Caco-2 (cell line): ENCODE measurements at regions of chr7 and their contacts with region 1.

Region 1: DNA sequence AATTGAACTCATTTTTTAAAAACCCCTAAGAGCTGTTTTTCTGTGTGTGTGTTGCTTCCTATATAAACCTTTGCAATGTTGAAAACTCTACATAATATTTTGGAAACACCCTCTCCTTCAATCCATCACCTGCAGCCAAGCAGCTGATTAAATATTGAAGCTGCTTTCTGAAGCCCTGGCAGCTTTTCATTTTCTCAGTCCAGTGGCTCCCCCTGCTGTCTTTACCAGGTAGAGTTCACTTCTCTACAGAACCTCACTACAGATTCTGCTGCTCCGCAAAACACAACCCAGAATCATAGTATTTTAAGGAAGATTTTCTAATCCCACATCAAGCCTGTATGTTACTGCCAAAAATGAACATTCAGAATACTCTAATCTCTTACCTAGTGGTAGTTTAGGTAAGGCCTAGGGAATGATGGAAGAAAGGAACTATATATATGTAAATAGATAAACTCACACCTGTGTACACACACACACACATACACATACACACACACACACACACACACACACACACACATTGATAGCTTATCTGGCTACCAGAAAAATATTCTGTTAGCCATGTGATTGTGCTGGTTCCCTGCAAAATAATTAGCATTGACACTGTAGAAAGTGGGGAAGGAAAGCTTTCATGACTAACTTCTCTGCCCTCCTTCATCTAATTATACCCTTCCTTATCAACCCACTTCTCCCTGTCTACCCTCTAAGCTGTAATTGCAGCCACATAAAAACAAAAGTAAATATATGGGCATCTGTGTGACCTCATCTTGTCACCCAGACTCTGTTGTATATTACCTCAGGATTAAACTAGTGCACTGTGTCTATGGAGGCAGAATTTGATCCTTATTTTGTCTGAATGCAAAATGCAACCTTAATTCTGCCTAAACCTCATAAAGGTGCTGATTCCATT is 229.5 kb upstream of the FZD1 start:
- DNase-seq: peak in 1 of 2 experiments; percentile 64
- H3K4me3 ChIP-seq: no peak overlapping the region
- H3K4me3 Mint-ChIP-seq: no peak overlapping the region
- H3K27ac Mint-ChIP-seq: no peak overlapping the region
- H3K4me1 ChIP-seq: no peaks in the 10 kb centered on the region
- H3K4me1 Mint-ChIP-seq: peaks cover 9% of the 10 kb centered on the region
- H3K27me3 ChIP-seq: no peaks in the 10 kb centered on the region
- H3K27me3 Mint-ChIP-seq: no peaks in the 10 kb centered on the region
- CTCF ChIP-seq: peak; percentile 69 to 72

Region 2: DNA sequence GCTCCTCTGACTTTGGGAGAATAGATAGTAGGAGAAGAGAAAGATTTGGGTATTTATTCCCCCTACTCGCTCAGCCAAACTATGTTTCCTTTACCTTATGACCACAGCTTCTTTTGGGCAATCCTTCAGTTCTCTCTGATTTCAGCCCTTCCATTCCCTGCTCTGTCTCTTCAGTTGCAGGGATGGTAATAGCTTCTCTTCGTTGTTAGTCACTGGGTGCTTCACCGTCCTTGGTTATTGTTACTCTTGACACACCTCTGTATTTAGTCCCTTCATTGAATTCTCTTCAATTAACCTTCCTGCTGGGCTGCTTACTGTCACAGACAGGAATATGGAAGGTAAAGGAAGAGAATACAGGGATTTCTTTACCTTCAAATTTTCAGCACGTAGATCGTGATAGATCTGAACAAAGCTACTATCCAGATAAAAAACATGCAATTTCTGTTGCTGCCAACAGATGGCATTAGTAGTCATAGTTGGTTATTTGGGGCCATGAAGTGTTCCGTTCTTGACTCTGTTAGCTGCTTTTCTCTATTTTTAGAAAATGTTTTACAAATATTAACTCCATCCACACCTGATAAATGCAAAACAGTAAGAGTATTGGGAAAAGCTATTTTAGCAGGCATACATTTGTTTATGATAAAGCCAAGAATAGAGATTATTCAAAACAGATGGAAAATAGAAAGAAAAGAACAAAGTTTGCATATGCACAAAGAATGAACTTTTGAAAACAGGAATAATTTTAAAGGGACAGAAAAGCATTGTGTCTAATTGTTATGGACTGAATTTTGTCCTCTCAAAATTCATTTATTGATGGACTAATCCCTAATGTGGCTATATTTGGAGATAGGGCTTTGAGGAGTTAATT is 579.3 kb before region 1 on chr7:
- CTCF ChIA-PET with region 1: interaction called, 23 read pairs
- POLR2A ChIA-PET with region 1: no interaction called
- intact Hi-C with region 1: loop called (anchors 1 kb)
- DNase-seq: peak in 1 of 2 experiments; percentile 42
- H3K4me3 ChIP-seq: no peak overlapping the region
- H3K4me3 Mint-ChIP-seq: peak overlapping the region; percentile 60
- H3K27ac Mint-ChIP-seq: no peak overlapping the region
- H3K4me1 ChIP-seq: 0 out of 2 replicates have a peak, but pooled peaks cover 4% of the 10 kb centered on the region
- H3K4me1 Mint-ChIP-seq: peaks cover 8% of the 10 kb centered on the region
- H3K27me3 ChIP-seq: no peaks in the 10 kb centered on the region
- H3K27me3 Mint-ChIP-seq: peaks cover 8% of the 10 kb centered on the region
- CTCF ChIP-seq: peak; percentile 40 to 75

Region 3: GRCh38 chr7:90613088-90613498 is 421.6 kb before region 1 on chr7:
- CTCF ChIA-PET with region 1: no interaction called
- POLR2A ChIA-PET with region 1: no interaction called
- intact Hi-C with region 1: no loop called
- DNase-seq: no peak
- H3K4me3 ChIP-seq: no peak overlapping the region
- H3K4me3 Mint-ChIP-seq: no peak overlapping the region
- H3K27ac Mint-ChIP-seq: no peak overlapping the region
- H3K4me1 ChIP-seq: no peaks in the 10 kb centered on the region
- H3K4me1 Mint-ChIP-seq: no peaks in the 10 kb centered on the region
- H3K27me3 ChIP-seq: no peaks in the 10 kb centered on the region
- H3K27me3 Mint-ChIP-seq: no peaks in the 10 kb centered on the region
- CTCF ChIP-seq: no peak

Region 4: GRCh38 chr7:90690159-90690858 is 344.4 kb before region 1 on chr7:
- CTCF ChIA-PET with region 1: interaction called, 4 read pairs
- POLR2A ChIA-PET with region 1: no interaction called
- intact Hi-C with region 1: loop called (anchors 1 kb)
- DNase-seq: no peak
- H3K4me3 ChIP-seq: no peak overlapping the region
- H3K4me3 Mint-ChIP-seq: no peak overlapping the region
- H3K27ac Mint-ChIP-seq: no peak overlapping the region
- H3K4me1 ChIP-seq: peaks cover 34% of the 10 kb centered on the region
- H3K4me1 Mint-ChIP-seq: peaks cover 25% of the 10 kb centered on the region
- H3K27me3 ChIP-seq: no peaks in the 10 kb centered on the region
- H3K27me3 Mint-ChIP-seq: no peaks in the 10 kb centered on the region
- CTCF ChIP-seq: peak in 1 of 2 experiments; percentile 2

Region 5: DNA sequence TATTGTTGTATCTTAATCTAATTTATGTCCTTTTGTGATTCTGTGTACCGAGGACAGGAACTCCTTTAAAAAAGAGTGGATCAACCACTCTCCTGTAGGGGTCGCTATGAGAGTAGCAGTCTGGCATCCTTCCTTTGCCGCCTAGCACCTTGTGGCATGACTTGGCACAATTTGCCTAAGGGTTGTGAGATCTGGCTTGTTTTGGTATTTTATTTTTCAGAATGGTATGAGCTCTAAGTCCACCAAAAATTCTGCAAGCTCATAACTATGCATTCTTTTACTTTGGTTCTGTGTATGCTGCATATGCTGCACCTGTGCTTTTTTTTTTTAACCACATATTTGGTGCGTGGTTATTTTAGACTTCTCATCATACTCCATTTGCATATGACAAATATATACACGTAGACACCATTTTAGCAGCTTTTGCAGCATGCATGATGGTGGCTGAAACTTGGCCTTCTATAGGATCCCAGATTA is 325.8 kb before region 1 on chr7:
- CTCF ChIA-PET with region 1: interaction called, 3 read pairs
- POLR2A ChIA-PET with region 1: no interaction called
- intact Hi-C with region 1: loop called (anchors 1 kb)
- DNase-seq: peak in 1 of 2 experiments; percentile 43
- H3K4me3 ChIP-seq: no peak overlapping the region
- H3K4me3 Mint-ChIP-seq: no peak overlapping the region
- H3K27ac Mint-ChIP-seq: no peak overlapping the region
- H3K4me1 ChIP-seq: peaks cover 25% of the 10 kb centered on the region
- H3K4me1 Mint-ChIP-seq: peaks cover 38% of the 10 kb centered on the region
- H3K27me3 ChIP-seq: no peaks in the 10 kb centered on the region
- H3K27me3 Mint-ChIP-seq: no peaks in the 10 kb centered on the region
- CTCF ChIP-seq: peak; percentile 47 to 61

Region 6: DNA sequence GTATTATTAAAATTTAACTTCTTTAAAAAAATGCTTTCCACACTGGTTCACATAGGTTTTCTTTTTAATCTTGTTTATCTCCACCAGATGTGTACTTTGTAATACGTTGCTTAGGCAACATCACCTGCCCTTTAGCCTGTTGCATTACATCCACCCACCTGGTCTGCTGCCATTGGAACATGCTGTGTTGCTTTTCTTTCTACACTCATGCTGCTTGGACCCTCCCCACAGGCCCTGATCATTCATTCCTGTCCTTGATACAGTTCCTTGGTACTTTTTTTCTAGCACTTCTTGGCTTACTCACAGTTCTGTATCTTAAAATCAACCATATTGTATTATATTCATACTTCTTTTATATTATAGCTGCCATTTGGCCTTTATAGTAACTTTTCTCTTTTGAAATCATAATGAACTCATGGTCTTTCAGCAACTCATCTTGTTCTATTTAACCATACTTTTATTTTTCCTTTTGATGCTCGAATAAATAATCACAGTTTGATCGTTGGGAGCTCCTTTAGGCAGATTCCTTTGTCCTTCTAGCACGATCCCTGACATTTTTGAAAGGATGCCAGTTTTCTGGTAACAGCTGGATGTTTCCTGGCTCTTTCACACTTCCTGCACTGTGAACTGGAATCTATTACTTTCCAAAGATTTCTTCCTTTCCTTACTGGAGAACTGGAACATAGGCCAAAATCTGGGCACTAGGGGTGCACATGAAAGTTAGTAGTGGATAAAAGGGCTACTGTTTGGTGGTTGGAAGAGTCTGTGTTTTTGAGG is 313.5 kb before region 1 on chr7:
- CTCF ChIA-PET with region 1: no interaction called
- POLR2A ChIA-PET with region 1: no interaction called
- intact Hi-C with region 1: no loop called
- DNase-seq: peak; percentile 89 to 92
- H3K4me3 ChIP-seq: no peak overlapping the region
- H3K4me3 Mint-ChIP-seq: peak overlapping the region; percentile 30
- H3K27ac Mint-ChIP-seq: peak overlapping the region; percentile 87
- H3K4me1 ChIP-seq: peaks cover 62% of the 10 kb centered on the region
- H3K4me1 Mint-ChIP-seq: peaks cover 37% of the 10 kb centered on the region
- H3K27me3 ChIP-seq: no peaks in the 10 kb centered on the region
- H3K27me3 Mint-ChIP-seq: no peaks in the 10 kb centered on the region
- CTCF ChIP-seq: no peak

Region 7: GRCh38 chr7:90749262-90749661 is 285.5 kb before region 1 on chr7:
- CTCF ChIA-PET with region 1: no interaction called
- POLR2A ChIA-PET with region 1: no interaction called
- intact Hi-C with region 1: loop called (anchors 10 kb)
- DNase-seq: no peak
- H3K4me3 ChIP-seq: no peak overlapping the region
- H3K4me3 Mint-ChIP-seq: no peak overlapping the region
- H3K27ac Mint-ChIP-seq: no peak overlapping the region
- H3K4me1 ChIP-seq: no peaks in the 10 kb centered on the region
- H3K4me1 Mint-ChIP-seq: no peaks in the 10 kb centered on the region
- H3K27me3 ChIP-seq: no peaks in the 10 kb centered on the region
- H3K27me3 Mint-ChIP-seq: no peaks in the 10 kb centered on the region
- CTCF ChIP-seq: no peak

Region 8: GRCh38 chr7:90931986-90932916 is 102.5 kb before region 1 on chr7:
- CTCF ChIA-PET with region 1: interaction called, 11 read pairs
- POLR2A ChIA-PET with region 1: no interaction called
- intact Hi-C with region 1: no loop called
- DNase-seq: no peak
- H3K4me3 ChIP-seq: no peak overlapping the region
- H3K4me3 Mint-ChIP-seq: no peak overlapping the region
- H3K27ac Mint-ChIP-seq: no peak overlapping the region
- H3K4me1 ChIP-seq: no peaks in the 10 kb centered on the region
- H3K4me1 Mint-ChIP-seq: no peaks in the 10 kb centered on the region
- H3K27me3 ChIP-seq: no peaks in the 10 kb centered on the region
- H3K27me3 Mint-ChIP-seq: no peaks in the 10 kb centered on the region
- CTCF ChIP-seq: no peak